Heart left ventricle (tissue), 16 donors: ENCODE measurements at regions of chr12 and their contacts with region 1.

Region 1: DNA sequence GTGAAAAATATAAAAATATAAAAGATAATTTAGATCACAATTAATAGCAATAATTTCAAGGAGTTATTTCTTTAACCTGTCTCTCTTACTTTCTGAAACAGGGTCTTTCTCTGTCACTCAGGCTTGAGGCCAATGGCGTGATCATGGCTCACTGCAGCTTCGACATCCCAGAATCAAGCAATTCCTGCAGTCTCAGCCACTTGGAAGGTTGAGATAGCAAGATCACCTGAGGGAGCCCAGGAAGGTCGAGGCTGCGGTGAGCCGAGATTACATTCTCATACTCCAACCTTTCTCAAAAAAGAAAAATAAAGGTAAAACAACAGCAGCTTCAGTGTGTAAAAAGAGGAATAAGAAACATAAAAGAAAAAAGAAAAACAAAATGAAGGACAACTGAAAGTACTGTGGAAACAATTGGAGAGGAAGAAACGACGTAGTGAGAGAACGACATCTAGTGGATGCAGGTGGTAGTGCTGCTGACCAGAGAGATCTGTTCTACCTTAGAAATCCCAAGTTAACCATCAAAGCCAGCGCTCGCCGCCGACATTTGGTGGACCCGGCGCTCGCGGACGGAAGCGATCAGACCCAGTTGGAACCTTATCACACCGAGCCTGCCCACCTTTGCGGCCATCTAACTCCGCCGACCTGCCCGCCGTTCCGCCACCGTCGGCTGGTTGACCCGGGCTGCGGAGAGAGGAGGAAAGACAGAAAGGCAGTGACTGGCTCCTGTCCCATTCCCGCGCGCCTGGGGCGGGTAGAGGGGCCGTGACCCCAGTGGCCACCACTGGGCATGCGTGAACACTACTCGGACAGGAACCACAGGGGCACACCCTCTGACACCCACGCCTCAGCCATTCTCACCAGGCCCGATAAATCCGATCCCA is 196.1 kb downstream of the ALG10 start:
- DNase-seq: peak in 4 of 5 donors; percentile 48 to 69 (median 58)
- ATAC-seq: peak; percentile 67 to 92 (median 86)
- H3K4me3 ChIP-seq: peak overlapping the region; percentile 30 to 71 (median 58)
- H3K27ac ChIP-seq: peak overlapping the region in 5 of 12 donors; percentile 12 to 81 (median 60)
- H3K4me1 ChIP-seq: peaks cover 0 to 5% (median 0%) of the 10 kb centered on the region in 12 donors
- H3K27me3 ChIP-seq: peaks cover 0 to 10% (median 0%) of the 10 kb centered on the region in 9 donors
- CTCF ChIP-seq: peak; percentile 87 to 97 (median 95)
- POLR2A ChIP-seq: no peak

Region 2: DNA sequence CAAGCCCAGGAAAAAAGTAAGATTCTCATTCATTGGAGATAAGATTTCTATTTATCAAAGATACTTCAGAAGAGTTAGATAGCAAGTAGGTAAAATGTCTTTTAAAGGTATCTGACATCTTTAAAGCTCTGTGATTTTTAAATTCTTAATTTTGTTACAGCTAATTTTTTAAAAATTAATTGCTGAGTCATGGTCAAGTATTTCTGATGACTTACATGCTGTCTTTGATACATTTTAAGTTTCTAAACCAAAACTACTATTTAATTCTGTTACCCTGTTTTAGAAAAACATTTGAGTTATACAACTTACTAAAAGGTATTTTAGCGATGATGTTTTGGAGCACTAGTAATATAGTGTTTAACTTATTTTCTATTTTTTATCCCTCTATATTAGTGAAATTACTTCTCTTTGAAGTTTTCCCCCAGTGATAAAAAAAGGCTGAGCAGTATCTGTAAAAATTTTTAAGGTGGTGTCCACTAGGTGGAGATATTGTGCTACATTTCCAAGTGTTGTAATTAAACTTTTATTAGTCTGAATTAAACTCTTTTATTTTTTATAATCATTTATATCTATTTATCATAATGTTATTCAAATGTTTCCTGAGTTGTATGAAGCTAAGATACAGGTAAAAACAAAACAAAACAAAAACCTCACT is 184.7 kb before region 1 on chr12:
- intact Hi-C with region 1: loop called in 2 of 10 experiments (anchors 5 kb)
- DNase-seq: no peak
- ATAC-seq: no peak
- H3K4me3 ChIP-seq: no peak overlapping the region
- H3K27ac ChIP-seq: no peak overlapping the region
- H3K4me1 ChIP-seq: no peaks in the 10 kb centered on the region
- H3K27me3 ChIP-seq: no peaks in the 10 kb centered on the region
- CTCF ChIP-seq: peak; percentile 21 to 71 (median 56)
- POLR2A ChIP-seq: no peak

Region 3: DNA sequence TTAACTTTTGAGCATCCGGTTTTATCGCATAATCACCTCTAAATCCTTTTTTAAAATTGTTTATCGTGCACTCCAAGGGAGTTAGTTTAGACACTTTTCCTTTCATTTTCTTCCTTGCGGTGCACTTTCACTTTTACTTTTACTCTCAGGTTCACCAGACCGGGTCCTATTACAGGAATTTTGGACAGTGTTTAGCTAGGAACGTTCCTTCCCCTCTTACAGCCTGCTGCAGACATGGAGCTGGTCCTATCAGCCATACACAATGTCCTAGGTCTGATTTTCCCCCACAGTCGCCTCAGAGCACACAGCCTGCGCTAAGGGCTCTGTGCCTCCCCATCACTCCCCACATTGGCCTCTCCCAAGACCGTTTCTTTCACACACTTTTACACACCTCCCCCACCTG is 92.2 kb before region 1 on chr12:
- intact Hi-C with region 1: loop called (anchors 1 to 5 kb)
- DNase-seq: no peak
- ATAC-seq: peak in 1 of 4 donors; percentile 61
- H3K4me3 ChIP-seq: peak overlapping the region in 10 of 12 donors; percentile 15 to 47 (median 34)
- H3K27ac ChIP-seq: peak overlapping the region in 8 of 12 donors; percentile 0 to 70 (median 51)
- H3K4me1 ChIP-seq: peaks cover 0 to 15% (median 2%) of the 10 kb centered on the region in 12 donors
- H3K27me3 ChIP-seq: peaks cover 0 to 6% (median 0%) of the 10 kb centered on the region in 9 donors
- CTCF ChIP-seq: no peak
- POLR2A ChIP-seq: no peak

Region 4: GRCh38 chr12:34163431-34163830 is 55.0 kb before region 1 on chr12:
- intact Hi-C with region 1: loop called in 1 of 10 experiments (anchors 10 kb)
- DNase-seq: no peak
- ATAC-seq: no peak
- H3K4me3 ChIP-seq: no peak overlapping the region
- H3K27ac ChIP-seq: no peak overlapping the region
- H3K4me1 ChIP-seq: no peaks in the 10 kb centered on the region
- H3K27me3 ChIP-seq: no peaks in the 10 kb centered on the region
- CTCF ChIP-seq: no peak
- POLR2A ChIP-seq: no peak